ENCODE measurements at regions of chr4 and their contacts with region 1.

Region 1: GRCh38 chr4:56435306-56435926 is at the start of gene PPAT:
- DNase-seq: peak; percentile 97 to 99 (median 99)
- ATAC-seq: peak; percentile 80
- H3K4me3 ChIP-seq: peak within 1 kb of the TSS; percentile 91
- H3K4me3 Mint-ChIP-seq: peak within 1 kb of the TSS; percentile 92
- H3K27ac ChIP-seq: peak within 1 kb of the TSS; percentile 59 to 91
- H3K27ac Mint-ChIP-seq: peak within 1 kb of the TSS; percentile 77
- H3K4me1 ChIP-seq: peaks cover 26% of the 10 kb centered on the region
- H3K4me1 Mint-ChIP-seq: peaks cover 41% of the 10 kb centered on the region
- H3K27me3 ChIP-seq: no peaks in the 10 kb centered on the region
- H3K27me3 Mint-ChIP-seq: no peaks in the 10 kb centered on the region
- CTCF ChIP-seq: peak; percentile 23
- total RNA-seq, gene PPAT: 4.7 to 6.3 TPM

Region 2: GRCh38 chr4:54941994-54942552 is 1493.3 kb before region 1 on chr4:
- CTCF ChIA-PET with region 1: no interaction called
- POLR2A ChIA-PET with region 1: interaction called, 3 read pairs
- intact Hi-C with region 1: loop called in 1 of 2 experiments (anchors 5 kb)
- DNase-seq: peak; percentile 28 to 71 (median 48)
- ATAC-seq: peak; percentile 65
- H3K4me3 ChIP-seq: peak overlapping the region; percentile 35
- H3K4me3 Mint-ChIP-seq: peak overlapping the region; percentile 72
- H3K27ac ChIP-seq: peak overlapping the region; percentile 49 to 71
- H3K27ac Mint-ChIP-seq: peak overlapping the region; percentile 97
- H3K4me1 ChIP-seq: peaks cover 28% of the 10 kb centered on the region
- H3K4me1 Mint-ChIP-seq: peaks cover 72% of the 10 kb centered on the region
- H3K27me3 ChIP-seq: no peaks in the 10 kb centered on the region
- H3K27me3 Mint-ChIP-seq: no peaks in the 10 kb centered on the region
- CTCF ChIP-seq: no peak

Region 3: DNA sequence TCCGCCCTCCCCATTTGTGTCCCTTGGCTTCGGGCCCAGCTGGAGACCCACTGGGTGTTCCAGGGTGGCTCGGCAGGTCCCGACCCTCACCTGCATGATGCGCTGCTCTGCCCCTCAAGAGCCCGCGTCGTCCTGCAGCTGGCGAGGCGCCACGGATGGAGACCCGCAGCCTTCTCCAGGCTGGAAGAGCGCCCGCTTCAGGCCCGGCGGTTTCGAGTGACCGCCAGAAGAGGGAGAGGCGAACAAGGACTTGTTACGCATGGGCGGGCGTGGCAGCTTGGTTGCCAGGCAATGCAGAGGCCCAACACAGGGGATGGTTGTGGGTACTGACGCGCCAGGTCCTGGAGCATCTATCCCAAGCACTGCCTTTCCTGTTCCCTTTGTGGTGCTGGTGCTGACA is 843.4 kb before region 1 on chr4 and contains the start of gene PDCL2:
- CTCF ChIA-PET with region 1: no interaction called
- POLR2A ChIA-PET with region 1: no interaction called
- intact Hi-C with region 1: no loop called
- DNase-seq: no peak
- ATAC-seq: no peak
- H3K4me3 ChIP-seq: no peak within 1 kb of the TSS
- H3K4me3 Mint-ChIP-seq: no peak within 1 kb of the TSS
- H3K27ac ChIP-seq: no peak within 1 kb of the TSS
- H3K27ac Mint-ChIP-seq: no peak within 1 kb of the TSS
- H3K4me1 ChIP-seq: no peaks in the 10 kb centered on the region
- H3K4me1 Mint-ChIP-seq: no peaks in the 10 kb centered on the region
- H3K27me3 ChIP-seq: no peaks in the 10 kb centered on the region
- H3K27me3 Mint-ChIP-seq: peaks cover 7% of the 10 kb centered on the region
- CTCF ChIP-seq: no peak
- total RNA-seq, gene PDCL2: not detected

Region 4: DNA sequence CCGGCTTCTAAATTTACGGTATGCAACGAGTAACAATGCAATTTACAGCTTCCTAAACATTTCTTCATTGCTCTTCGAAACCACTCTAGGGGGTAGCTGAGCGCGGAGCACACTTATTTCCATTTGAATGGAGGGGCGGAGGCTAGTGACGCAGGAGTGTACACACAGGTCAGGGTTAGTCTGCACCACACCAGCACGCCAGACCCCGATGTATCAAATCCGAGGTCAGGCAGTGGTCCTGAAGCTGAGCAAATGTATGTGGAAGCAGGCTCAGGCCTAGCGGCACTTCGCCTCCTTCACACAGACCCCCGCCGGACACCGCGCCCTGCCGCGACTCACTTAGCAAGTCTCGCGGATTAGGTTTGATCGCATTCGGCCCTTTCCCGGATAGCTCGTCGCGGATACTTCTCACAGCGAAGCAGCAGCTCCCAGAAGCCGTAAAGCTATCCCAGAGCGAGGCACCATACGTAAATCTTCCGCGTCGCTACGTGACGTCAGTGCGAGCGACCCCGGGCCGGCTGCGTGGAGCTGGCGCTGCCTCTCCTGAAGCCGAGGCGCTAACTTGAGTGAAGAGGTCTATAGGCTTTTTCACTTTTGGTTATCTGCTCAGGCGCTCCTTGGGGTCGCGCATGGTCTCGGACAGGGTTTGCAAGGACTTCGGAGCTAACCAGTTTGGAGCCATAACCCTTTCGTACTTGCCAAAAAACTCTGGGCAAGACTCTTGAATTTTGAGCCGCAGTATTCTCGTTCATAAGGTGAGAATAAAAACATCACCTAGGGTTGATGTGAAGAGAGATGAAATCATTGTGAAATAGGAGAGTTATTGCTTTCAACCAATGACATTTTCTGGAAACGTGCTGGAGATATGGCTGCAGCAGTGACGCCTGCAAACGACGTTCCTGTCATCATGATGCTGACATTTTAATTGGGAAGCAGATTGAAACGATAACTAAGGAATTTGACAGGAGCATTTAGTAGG is 48.1 kb before region 1 on chr4 and contains the start of gene AASDH:
- CTCF ChIA-PET with region 1: interaction called, 12 read pairs
- POLR2A ChIA-PET with region 1: interaction called, 146 read pairs
- intact Hi-C with region 1: loop called (anchors 1 to 2 kb)
- DNase-seq: peak; percentile 85 to 99 (median 96)
- ATAC-seq: peak; percentile 86
- H3K4me3 ChIP-seq: peak within 1 kb of the TSS; percentile 97
- H3K4me3 Mint-ChIP-seq: peak within 1 kb of the TSS; percentile 93
- H3K27ac ChIP-seq: peak within 1 kb of the TSS; percentile 91 to 97
- H3K27ac Mint-ChIP-seq: peak within 1 kb of the TSS; percentile 99
- H3K4me1 ChIP-seq: peaks cover 17% of the 10 kb centered on the region
- H3K4me1 Mint-ChIP-seq: peaks cover 46% of the 10 kb centered on the region
- H3K27me3 ChIP-seq: no peaks in the 10 kb centered on the region
- H3K27me3 Mint-ChIP-seq: no peaks in the 10 kb centered on the region
- CTCF ChIP-seq: no peak
- total RNA-seq, gene AASDH: 10.2 to 10.6 TPM

Region 5: GRCh38 chr4:56460085-56460484 is 24.7 kb after region 1 on chr4:
- CTCF ChIA-PET with region 1: interaction called, 8 read pairs
- POLR2A ChIA-PET with region 1: interaction called, 47 read pairs
- intact Hi-C with region 1: loop called in 1 of 2 experiments (anchors 2 kb)
- DNase-seq: no peak
- ATAC-seq: no peak
- H3K4me3 ChIP-seq: no peak overlapping the region
- H3K4me3 Mint-ChIP-seq: no peak overlapping the region
- H3K27ac ChIP-seq: no peak overlapping the region
- H3K27ac Mint-ChIP-seq: no peak overlapping the region
- H3K4me1 ChIP-seq: peaks cover 3% of the 10 kb centered on the region
- H3K4me1 Mint-ChIP-seq: peaks cover 20% of the 10 kb centered on the region
- H3K27me3 ChIP-seq: no peaks in the 10 kb centered on the region
- H3K27me3 Mint-ChIP-seq: no peaks in the 10 kb centered on the region
- CTCF ChIP-seq: no peak

Region 6: GRCh38 chr4:56757821-56758411 is 322.5 kb after region 1 on chr4:
- CTCF ChIA-PET with region 1: interaction called, 4 read pairs
- POLR2A ChIA-PET with region 1: interaction called, 33 read pairs
- intact Hi-C with region 1: no loop called
- DNase-seq: peak; percentile 35 to 85 (median 58)
- ATAC-seq: peak; percentile 81
- H3K4me3 ChIP-seq: peak overlapping the region; percentile 36
- H3K4me3 Mint-ChIP-seq: peak overlapping the region; percentile 83
- H3K27ac ChIP-seq: peak overlapping the region; percentile 71 to 75
- H3K27ac Mint-ChIP-seq: peak overlapping the region; percentile 89
- H3K4me1 ChIP-seq: peaks cover 44% of the 10 kb centered on the region
- H3K4me1 Mint-ChIP-seq: peaks cover 62% of the 10 kb centered on the region
- H3K27me3 ChIP-seq: no peaks in the 10 kb centered on the region
- H3K27me3 Mint-ChIP-seq: no peaks in the 10 kb centered on the region
- CTCF ChIP-seq: no peak

Region 7: GRCh38 chr4:56977321-56978012 is 542.1 kb after region 1 on chr4 and contains the start of gene NOA1:
- CTCF ChIA-PET with region 1: no interaction called
- POLR2A ChIA-PET with region 1: interaction called, 101 read pairs
- intact Hi-C with region 1: loop called in 1 of 2 experiments (anchors 10 kb)
- DNase-seq: peak; percentile 95 to 99 (median 96)
- ATAC-seq: peak; percentile 80
- H3K4me3 ChIP-seq: peak within 1 kb of the TSS; percentile 99
- H3K4me3 Mint-ChIP-seq: peak within 1 kb of the TSS; percentile 96
- H3K27ac ChIP-seq: peak within 1 kb of the TSS; percentile 73 to 92
- H3K27ac Mint-ChIP-seq: peak within 1 kb of the TSS; percentile 95
- H3K4me1 ChIP-seq: peaks cover 54% of the 10 kb centered on the region
- H3K4me1 Mint-ChIP-seq: peaks cover 70% of the 10 kb centered on the region
- H3K27me3 ChIP-seq: no peaks in the 10 kb centered on the region
- H3K27me3 Mint-ChIP-seq: no peaks in the 10 kb centered on the region
- CTCF ChIP-seq: no peak
- total RNA-seq, gene NOA1: 14.3 to 15.6 TPM

Region 8: DNA sequence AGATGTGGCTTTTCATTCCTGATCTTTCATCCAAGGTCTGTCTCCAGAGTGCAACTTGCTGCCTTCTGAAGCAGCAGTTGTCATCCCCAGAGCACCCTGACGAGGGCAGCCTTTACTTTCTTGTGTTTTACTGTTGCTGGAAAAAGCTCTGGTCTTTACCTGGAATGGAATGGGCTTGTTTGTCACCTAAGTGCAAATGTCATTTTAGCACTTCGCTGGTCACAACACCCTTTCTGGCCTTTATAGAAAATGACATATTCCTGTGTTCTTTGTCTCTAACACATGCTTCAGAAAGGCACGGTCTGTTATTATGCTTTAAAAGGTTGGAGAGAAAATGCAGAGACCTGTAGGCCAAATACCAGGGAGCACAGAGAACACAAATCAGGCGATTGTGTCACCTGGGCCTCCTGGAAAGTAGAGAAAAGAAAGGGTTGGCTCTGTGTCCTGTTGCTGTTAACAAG is 1007.4 kb after region 1 on chr4:
- CTCF ChIA-PET with region 1: no interaction called
- POLR2A ChIA-PET with region 1: no interaction called
- intact Hi-C with region 1: no loop called
- DNase-seq: no peak
- ATAC-seq: no peak
- H3K4me3 ChIP-seq: no peak overlapping the region
- H3K4me3 Mint-ChIP-seq: no peak overlapping the region
- H3K27ac ChIP-seq: no peak overlapping the region
- H3K27ac Mint-ChIP-seq: no peak overlapping the region
- H3K4me1 ChIP-seq: no peaks in the 10 kb centered on the region
- H3K4me1 Mint-ChIP-seq: no peaks in the 10 kb centered on the region
- H3K27me3 ChIP-seq: no peaks in the 10 kb centered on the region
- H3K27me3 Mint-ChIP-seq: no peaks in the 10 kb centered on the region
- CTCF ChIP-seq: no peak

Measured in CD4-positive, alpha-beta T cell (primary cell).